Activated naive CD4-positive, alpha-beta T cell treated with anti-CD3 and anti-CD28 coated beads, Interleukin-2, amount 10 ng/mL, durations not matched to agents 7 days and 5 days (primary cell): ENCODE measurements at regions of chr1 and their contacts with region 1.

Region 1: GRCh38 chr1:159891275-159892157 is 8.4 kb downstream of the CFAP45 start:
- DNase-seq: peak; percentile 86
- H3K4me3 Mint-ChIP-seq: no peak overlapping the region
- H3K27ac Mint-ChIP-seq: no peak overlapping the region
- H3K4me1 Mint-ChIP-seq: peaks cover 16% of the 10 kb centered on the region
- H3K27me3 Mint-ChIP-seq: peaks cover 26% of the 10 kb centered on the region

Region 2: DNA sequence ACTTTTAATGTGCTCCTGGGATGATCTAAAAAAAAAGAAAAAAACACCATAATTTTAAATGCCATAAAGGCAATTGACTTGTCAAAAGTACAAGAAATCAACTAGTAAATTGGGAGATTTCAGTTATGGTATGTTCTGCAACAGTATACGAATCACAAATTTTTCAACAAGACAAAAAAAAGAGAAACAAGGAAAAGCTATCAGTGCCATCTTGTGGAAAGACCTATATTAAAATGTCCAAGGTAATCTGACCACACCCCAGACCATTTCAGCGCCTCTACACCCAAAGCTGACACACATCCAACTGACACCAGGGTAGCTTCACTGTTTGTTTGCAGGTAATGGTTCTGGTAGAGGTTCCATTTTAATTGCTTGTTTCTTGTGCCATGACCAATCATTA is 115.8 kb before region 1 on chr1:
- CTCF ChIA-PET with region 1: interaction called, 35 read pairs
- DNase-seq: no peak
- H3K4me3 Mint-ChIP-seq: no peak overlapping the region
- H3K27ac Mint-ChIP-seq: no peak overlapping the region
- H3K4me1 Mint-ChIP-seq: peaks cover 13% of the 10 kb centered on the region
- H3K27me3 Mint-ChIP-seq: peaks cover 20% of the 10 kb centered on the region

Region 3: GRCh38 chr1:159790237-159790917 is 101.1 kb before region 1 on chr1:
- CTCF ChIA-PET with region 1: interaction called, 430 read pairs
- DNase-seq: no peak
- H3K4me3 Mint-ChIP-seq: no peak overlapping the region
- H3K27ac Mint-ChIP-seq: no peak overlapping the region
- H3K4me1 Mint-ChIP-seq: peaks cover 4% of the 10 kb centered on the region
- H3K27me3 Mint-ChIP-seq: peaks cover 25% of the 10 kb centered on the region

Region 4: GRCh38 chr1:159854693-159855192 is 36.8 kb before region 1 on chr1:
- CTCF ChIA-PET with region 1: interaction called, 42 read pairs
- DNase-seq: peak; percentile 84
- H3K4me3 Mint-ChIP-seq: peak overlapping the region; percentile 71
- H3K27ac Mint-ChIP-seq: peak overlapping the region; percentile 81
- H3K4me1 Mint-ChIP-seq: peaks cover 15% of the 10 kb centered on the region
- H3K27me3 Mint-ChIP-seq: peaks cover 14% of the 10 kb centered on the region

Region 5: GRCh38 chr1:159924981-159925712 is 33.6 kb after region 1 on chr1 and contains the start of gene TAGLN2:
- CTCF ChIA-PET with region 1: interaction called, 42 read pairs
- DNase-seq: peak; percentile 92
- H3K4me3 Mint-ChIP-seq: peak within 1 kb of the TSS; percentile 91
- H3K27ac Mint-ChIP-seq: peak within 1 kb of the TSS; percentile 94
- H3K4me1 Mint-ChIP-seq: peaks cover 49% of the 10 kb centered on the region
- H3K27me3 Mint-ChIP-seq: peaks cover 16% of the 10 kb centered on the region

Region 6: DNA sequence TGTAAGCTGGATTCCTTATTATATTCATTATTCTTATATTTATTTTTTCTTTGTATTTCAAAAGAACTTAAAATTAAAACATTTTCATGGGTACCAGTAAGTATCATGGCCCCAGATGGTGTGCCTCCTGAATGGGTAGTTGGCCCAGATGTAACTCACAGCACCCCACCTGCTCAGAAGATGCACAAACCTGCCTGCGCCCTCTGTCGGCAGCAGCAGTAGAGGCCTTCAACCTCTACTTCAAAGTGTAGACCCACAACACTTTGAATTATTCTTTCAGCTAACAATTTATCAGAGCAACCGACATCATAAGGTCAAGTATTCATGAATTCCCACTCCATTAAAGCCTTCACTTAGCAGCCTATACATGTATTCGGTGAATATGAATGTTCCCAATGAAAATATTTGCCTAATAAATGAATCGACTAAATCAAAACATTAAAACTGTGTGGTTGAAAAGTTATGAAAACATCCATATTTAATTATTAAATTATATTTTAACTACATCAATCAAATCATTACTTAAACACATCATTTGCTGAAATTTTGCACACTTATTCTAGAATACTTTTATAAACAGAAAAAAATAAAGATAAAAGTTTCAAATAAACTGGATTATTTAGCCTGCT is 114.9 kb after region 1 on chr1:
- CTCF ChIA-PET with region 1: interaction called, 151 read pairs
- DNase-seq: peak; percentile 86
- H3K4me3 Mint-ChIP-seq: no peak overlapping the region
- H3K27ac Mint-ChIP-seq: no peak overlapping the region
- H3K4me1 Mint-ChIP-seq: no peaks in the 10 kb centered on the region
- H3K27me3 Mint-ChIP-seq: peaks cover 29% of the 10 kb centered on the region